WTC11 (cell line): ENCODE measurements at regions of chr10 and their contacts with region 1.

Region 1: DNA sequence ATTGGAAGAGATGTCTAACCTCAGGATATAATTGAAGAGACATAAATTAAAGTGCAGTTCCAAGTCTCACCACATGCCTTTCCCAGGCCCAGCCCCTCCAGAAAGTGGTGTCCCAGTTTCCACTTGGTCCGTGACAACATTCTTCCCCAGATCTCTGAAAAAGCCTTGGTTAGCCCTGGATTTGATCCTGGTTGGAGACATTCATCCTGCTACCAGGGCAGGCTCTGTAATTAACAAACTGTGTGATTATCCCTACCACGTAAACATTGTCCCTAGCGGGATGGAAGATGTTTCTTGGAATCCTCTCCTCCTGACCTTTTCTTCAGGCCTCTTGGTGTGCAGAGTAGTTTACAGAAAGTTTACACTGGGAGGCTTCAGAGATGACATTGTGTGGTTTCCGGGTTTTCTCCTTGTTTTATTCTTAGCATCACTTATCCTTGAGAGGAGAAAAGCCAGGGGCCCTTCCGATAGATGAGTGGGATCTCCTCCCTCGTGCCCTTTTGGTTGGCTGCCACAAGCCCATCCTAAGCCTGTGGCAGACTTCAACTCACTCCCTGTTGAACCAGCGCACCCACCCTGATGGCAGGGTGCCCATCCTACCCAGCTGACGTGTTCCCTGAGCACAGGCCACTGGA is 83.8 kb downstream of the COL13A1 start:
- DNase-seq: no peak
- ATAC-seq: peak; percentile 48
- H3K4me3 Mint-ChIP-seq: no peak overlapping the region
- H3K27ac Mint-ChIP-seq: no peak overlapping the region
- H3K4me1 Mint-ChIP-seq: peaks cover 16% of the 10 kb centered on the region
- H3K27me3 Mint-ChIP-seq: no peaks in the 10 kb centered on the region; the same call in none of the 2 replicates
- CTCF ChIP-seq: peak; percentile 42; the same call in 1 of the 2 replicates

Region 2: DNA sequence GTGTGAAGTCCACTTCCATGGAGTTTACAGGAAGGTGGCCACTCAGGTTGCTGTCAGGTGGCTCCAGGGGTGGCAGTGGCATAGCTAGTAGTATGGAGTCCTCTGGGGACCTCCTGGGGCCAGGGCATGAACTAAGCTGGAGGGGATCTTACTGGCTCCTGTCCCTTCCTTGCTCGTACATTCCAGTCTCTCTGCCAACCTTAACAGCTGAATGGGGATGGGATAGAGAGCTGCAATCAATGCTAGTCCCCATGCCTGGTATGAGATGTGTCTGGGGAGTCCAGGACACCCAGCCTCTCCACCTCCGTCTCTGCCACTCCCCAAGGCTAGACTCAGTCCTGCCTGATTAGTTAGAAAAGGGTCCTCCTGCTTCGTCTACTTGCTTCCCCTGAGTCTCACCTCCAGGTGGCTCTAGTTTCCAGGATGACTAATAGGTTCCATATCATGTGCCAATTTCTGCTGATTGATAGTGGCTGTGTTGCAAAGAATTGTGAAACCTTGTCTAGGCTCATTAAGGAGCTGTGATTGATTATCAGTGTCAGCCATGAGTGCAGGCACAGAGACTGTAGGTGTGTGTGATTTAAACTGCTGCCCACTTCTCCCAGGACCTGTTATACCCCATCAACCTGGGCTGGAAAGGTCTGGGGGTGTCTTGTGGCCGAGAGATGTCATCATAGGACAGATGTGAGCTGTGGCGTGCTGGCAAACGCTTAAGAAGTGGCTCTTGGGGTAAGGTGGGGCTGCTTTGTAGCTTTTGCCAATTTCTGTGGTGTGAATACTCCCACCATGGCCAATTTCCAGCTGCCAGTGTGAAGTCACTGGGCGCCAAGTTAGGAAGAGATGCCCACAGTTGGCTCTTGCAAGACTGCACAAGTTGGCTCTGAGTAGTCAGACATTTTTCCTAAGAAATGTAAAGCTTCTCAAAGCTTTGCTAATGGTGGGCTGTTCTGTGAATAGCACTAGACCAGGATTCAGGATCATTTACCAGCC is 23.9 kb before region 1 on chr10:
- CTCF ChIA-PET with region 1: interaction called, 11 read pairs
- POLR2A ChIA-PET with region 1: no interaction called
- DNase-seq: no peak
- ATAC-seq: peak; percentile 73
- H3K4me3 Mint-ChIP-seq: no peak overlapping the region
- H3K27ac Mint-ChIP-seq: no peak overlapping the region
- H3K4me1 Mint-ChIP-seq: peaks cover 59% of the 10 kb centered on the region
- H3K27me3 Mint-ChIP-seq: peaks cover 9% of the 10 kb centered on the region
- CTCF ChIP-seq: no peak

Region 3: DNA sequence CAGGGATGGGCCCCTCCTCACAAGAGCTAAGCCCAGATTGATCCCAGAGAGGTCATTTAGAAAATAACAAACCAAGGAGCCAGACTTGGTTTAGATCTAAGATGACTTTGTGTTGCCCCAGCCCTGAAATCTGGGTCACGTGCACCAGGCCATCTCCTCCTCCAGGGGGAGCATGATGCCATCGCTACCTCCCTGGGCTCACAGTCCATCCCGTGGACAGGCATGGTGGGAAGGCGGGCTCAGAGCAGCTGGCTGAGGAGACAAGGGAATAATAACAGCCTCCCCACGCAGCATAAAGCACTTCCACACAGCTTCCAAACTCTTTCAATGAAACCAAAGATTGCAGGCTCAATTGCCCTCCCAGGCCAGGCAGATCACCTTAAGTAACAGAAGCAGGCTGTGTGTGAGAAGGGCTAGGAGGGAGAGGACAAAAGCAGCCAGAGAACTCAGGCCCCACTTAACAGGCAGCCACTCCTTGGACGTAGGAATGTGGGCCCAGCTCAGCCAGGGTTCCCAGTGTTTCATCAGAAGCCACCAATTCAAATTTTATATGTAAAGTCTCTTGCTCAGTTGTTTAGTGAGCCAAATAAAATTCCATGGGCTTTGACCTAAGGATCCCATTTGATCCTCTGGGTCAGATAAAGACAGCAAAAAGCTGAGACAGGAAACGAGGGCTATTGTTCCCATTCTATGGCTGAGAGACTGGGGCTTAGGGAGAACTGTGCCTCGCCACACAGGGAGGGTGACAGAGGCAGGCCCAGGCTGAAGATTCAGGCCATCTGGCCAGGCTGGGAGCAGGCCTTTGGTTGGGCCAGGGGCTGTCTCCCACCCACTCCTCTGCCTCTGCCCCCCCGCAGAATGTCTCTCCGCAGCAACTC is 16.4 kb after region 1 on chr10:
- CTCF ChIA-PET with region 1: interaction called, 19 read pairs
- POLR2A ChIA-PET with region 1: no interaction called
- DNase-seq: peak; percentile 77
- ATAC-seq: peak; percentile 86
- H3K4me3 Mint-ChIP-seq: no peak overlapping the region
- H3K27ac Mint-ChIP-seq: peak overlapping the region; percentile 86
- H3K4me1 Mint-ChIP-seq: peaks cover 35% of the 10 kb centered on the region
- H3K27me3 Mint-ChIP-seq: peaks cover 3% of the 10 kb centered on the region
- CTCF ChIP-seq: peak; percentile 61; the same call in 1 of the 2 replicates